Transverse colon (tissue), 4 donors: ENCODE measurements at regions of chr1 and their contacts with region 1.

Region 1: GRCh38 chr1:206635080-206635977 is at the start of gene DYRK3:
- DNase-seq: peak; percentile 96
- H3K4me3 ChIP-seq: peak within 1 kb of the TSS; percentile 48 to 89 (median 72)
- H3K27ac ChIP-seq: peak within 1 kb of the TSS; percentile 77 to 85 (median 82)
- H3K4me1 ChIP-seq: peaks cover 6 to 36% (median 18%) of the 10 kb centered on the region in 4 donors
- H3K27me3 ChIP-seq: peaks cover 21% of the 10 kb centered on the region
- CTCF ChIP-seq: peak in 3 of 5 experiments; percentile 7 to 37 (median 11)
- EP300 ChIP-seq: no peak
- POLR2A ChIP-seq: peak; percentile 79
- total RNA-seq, gene DYRK3: 1.6 to 3.2 TPM in 2 of 4 donors, not detected in the others

Region 2: GRCh38 chr1:206663832-206664652 is 28.7 kb after region 1 on chr1:
- in situ Hi-C with region 1: no loop called
- intact Hi-C with region 1: loop called (anchors 2 kb)
- DNase-seq: peak; percentile 71
- H3K4me3 ChIP-seq: peak overlapping the region in 1 of 4 donors; percentile 5
- H3K27ac ChIP-seq: peak overlapping the region in 1 of 4 donors; percentile 5
- H3K4me1 ChIP-seq: peaks cover 9 to 25% (median 20%) of the 10 kb centered on the region in 4 donors
- H3K27me3 ChIP-seq: peaks cover 3% of the 10 kb centered on the region
- CTCF ChIP-seq: peak; percentile 88 to 94 (median 91)
- EP300 ChIP-seq: no peak
- POLR2A ChIP-seq: no peak

Region 3: DNA sequence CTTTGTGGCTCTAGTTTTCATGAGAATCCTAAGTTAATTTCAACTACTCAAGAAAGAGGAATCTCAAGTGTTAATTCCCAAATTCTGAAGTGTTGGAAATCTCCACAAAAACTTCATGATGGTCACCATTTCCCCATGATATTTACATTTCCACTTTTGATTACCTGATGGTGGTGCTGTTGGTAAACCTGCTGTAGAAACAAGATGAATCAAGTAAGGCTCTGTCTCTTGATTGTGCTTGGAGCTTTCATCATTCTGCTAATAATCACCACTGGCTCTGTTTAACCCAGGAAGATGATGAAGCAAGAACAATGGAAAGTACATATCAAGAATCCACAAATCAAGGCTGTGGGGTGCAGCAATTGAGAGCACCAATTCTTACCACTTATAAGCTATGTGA is 546.5 kb after region 1 on chr1:
- in situ Hi-C with region 1: no loop called
- intact Hi-C with region 1: no loop called
- DNase-seq: no peak
- H3K4me3 ChIP-seq: no peak overlapping the region
- H3K27ac ChIP-seq: no peak overlapping the region
- H3K4me1 ChIP-seq: no peaks in the 10 kb centered on the region
- H3K27me3 ChIP-seq: no peaks in the 10 kb centered on the region
- CTCF ChIP-seq: no peak
- EP300 ChIP-seq: no peak
- POLR2A ChIP-seq: no peak